GM10248 (cell line): ENCODE measurements at regions of chr19 and their contacts with region 1.

Region 1: GRCh38 chr19:19304186-19304965 is 15.9 kb downstream of the SUGP1 start:
- DNase-seq: no peak
- CTCF ChIP-seq: no peak

Region 2: DNA sequence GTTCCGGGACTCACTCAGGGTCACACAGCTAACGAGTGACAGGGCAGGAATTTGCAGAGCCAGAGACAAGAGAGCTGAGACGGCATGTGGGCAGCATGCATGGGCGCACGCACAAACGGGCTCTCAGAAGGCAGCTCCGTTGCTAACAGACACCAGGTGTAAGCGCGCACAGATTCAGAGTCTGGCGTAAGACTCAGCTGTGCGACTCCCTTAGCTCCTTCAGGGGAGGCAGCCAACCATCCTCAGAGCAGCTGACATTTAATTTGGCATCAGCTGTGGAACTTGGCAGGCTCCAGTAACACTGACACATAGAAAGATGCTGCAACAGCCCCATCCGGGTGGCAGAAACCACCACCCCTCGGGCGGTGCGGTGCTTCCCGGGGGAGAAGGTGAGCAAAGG is 23.8 kb before region 1 on chr19:
- CTCF ChIA-PET with region 1: no interaction called
- POLR2A ChIA-PET with region 1: no interaction called
- DNase-seq: no peak
- CTCF ChIP-seq: no peak

Region 3: DNA sequence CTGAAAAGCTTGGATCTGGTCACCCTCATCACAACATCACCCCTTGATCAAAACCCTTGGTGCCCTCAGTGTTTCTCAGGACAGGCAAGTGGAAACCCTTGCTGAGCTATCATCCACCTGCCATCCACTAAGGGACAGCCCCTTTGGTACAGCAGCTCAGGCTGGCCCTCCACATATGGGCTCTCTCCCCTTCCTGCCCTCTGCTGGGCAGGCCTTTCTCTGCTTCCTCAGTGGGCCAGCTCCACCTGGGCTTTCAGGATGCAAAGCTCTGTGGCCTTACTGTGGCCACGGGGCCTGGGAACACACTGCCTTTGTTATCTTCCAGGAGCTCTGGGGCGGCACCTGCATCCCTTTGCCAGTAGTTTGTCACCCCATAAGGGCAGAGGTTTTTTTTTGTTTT is 11.1 kb after region 1 on chr19:
- CTCF ChIA-PET with region 1: interaction called, 11 read pairs
- POLR2A ChIA-PET with region 1: no interaction called
- DNase-seq: no peak
- CTCF ChIP-seq: no peak